Aorta (tissue), 5 donors: ENCODE measurements at regions of chr10 and their contacts with region 1.

Region 1: DNA sequence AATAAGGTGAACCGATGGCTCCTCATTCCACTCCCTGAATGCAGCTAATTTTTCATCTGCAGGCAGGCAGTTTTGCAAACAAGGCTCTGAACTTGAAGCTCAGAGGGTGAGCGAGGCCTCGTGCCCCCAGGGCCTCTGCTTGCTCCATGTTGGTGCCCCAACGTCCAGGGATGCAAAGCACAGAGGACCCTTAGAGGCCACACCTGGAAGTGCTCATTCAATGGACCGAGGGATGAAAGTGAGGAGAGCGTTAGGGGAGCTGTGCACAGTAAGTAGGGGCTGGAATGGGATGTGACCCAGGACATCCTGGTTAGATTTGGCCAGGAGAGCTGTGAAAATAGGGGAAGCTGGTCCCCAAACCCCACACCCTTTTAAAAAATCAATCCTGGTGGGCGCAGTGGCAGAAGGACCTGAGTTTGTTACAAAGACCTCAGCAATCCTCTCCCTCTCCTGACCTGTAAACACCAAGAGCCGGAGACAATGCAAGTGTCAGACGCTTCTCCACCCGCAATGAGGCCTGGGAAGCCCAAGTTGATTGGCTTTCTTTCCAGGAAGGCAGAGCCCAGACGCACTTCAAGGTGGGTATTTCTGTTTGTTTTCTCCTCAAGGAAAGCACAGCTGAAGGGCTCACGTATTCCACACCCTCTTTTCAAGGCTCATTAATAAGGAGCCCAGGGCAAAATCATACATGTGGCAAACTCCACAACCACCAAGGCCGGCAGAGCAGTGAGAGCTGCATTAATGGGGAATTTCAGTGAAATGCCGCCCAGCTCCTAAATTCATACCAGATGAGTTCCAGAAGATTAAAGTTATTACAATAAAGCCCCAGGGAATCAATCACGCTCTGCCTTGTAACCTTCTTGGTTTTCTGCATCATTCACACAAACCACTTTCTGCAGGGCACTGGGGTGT is 14.1 kb upstream of the CXCL12 start:
- DNase-seq: peak in 1 of 2 donors; percentile 14
- ATAC-seq: no peak
- H3K4me3 ChIP-seq: no peak overlapping the region
- H3K27ac ChIP-seq: no peak overlapping the region
- H3K4me1 ChIP-seq: no peaks in the 10 kb centered on the region
- H3K27me3 ChIP-seq: no peaks in the 10 kb centered on the region

Region 2: DNA sequence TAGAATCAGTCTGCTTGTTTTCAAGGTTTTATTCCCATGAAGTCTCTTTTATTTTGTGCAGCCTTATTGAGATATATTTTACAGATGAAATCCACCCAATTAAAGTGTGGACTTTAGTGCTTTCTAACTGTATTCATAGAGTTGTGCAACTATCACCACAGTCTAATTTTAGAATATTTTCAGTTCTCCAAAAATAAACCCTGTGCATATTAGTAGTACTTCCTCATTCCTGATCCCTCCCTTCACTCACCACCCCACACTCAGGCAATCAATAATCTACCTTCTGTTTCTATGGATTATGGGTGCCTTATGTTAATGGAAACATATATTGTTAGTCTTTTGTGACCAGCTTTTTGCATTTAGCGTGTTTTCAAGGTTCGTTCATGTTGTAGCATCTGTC is 326.4 kb after region 1 on chr10:
- intact Hi-C with region 1: loop called in 1 of 2 experiments (anchors 10 kb)
- DNase-seq: no peak
- ATAC-seq: peak; percentile 69
- H3K4me3 ChIP-seq: no peak overlapping the region
- H3K27ac ChIP-seq: peak overlapping the region in 1 of 2 donors; percentile 76
- H3K4me1 ChIP-seq: peaks cover 4% of the 10 kb centered on the region in 2 donors
- H3K27me3 ChIP-seq: no peaks in the 10 kb centered on the region